GM12878 (cell line): ENCODE measurements at regions of chr21 and their contacts with region 1.

Region 1: DNA sequence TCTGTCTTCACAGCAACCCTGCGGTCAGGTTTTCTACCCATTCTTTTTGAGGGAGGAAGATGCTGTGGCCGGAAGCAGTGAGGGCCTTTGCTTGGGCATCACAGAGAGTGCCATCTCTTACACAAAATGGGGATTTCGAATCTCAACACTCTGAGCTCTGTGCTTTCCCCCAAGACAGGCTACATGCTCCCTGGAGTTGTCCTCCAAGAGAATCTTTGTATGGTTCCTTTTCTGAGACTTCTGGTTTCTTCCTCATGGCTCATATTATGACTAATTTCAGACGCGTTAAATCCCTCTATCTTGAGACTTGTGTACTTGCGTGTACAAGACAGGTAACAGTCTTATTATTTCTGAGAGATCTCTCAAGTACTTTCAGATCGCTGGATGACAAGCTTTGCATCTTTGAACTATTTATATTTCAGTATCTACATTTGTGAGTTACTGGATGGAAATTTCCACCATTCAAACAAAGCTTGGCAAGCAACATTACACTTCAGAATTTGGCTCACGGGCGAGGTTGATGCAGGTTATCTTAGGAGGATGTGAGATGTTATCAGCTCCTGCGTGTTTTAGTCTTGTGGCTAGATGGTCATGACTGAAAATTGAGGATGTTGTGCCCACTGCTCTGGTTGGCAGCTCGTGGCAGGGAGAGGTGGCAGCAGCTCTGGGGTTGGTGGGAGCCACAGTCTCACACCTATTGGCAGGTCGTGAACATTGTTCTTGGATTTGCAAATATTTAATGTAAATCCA is 19.4 kb downstream of the ABCG1 start:
- DNase-seq: peak; percentile 57
- ATAC-seq: peak; percentile 39
- H3K4me3 ChIP-seq: no peak overlapping the region
- H3K27ac ChIP-seq: peak overlapping the region; percentile 22
- H3K4me1 ChIP-seq: peaks cover 65% of the 10 kb centered on the region
- H3K27me3 ChIP-seq: no peaks in the 10 kb centered on the region
- CTCF ChIP-seq: no peak
- EP300 ChIP-seq: peak; percentile 25 to 39; a peak in 1 of 4 replicates
- POLR2A ChIP-seq: no peak
- RAD21 ChIP-seq: no peak

Region 2: DNA sequence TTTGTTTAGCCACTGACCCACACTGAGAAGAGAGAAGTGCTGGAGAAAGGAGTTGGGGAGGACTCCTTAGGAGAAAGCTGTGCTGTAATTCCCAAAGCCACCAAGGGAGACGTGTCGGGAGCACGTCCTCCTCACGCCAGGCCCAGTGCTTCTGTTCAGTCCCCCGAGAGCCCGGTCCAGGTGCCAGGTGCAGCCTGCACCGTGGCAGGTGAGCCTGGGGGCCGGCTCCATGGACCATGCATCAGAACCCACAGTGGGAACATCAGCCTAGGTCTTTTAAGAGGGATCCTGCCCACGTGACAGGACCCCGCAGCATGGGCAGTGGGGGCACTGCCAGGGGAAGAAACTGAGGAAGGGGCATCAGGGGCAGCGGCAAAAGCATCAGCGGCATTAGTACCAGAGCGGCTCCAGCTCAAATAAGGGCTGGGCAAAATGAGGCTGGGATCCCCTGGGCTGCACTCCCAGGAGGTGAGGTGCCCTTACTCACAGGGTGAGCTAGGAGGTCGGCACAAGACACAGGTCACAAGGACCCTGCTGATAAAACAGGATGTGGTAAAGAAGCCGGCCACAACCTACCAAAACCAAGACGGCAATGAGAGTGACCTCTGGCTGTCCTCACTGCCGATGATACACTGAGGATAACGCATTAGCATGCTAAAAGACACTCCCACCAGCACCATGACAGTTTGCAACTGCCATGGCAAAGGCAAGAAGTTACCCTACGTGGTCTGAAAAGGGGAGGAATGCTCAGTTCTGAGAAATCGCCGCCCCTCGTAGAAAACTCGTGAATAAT is 334.6 kb before region 1 on chr21:
- CTCF ChIA-PET with region 1: no interaction called
- POLR2A ChIA-PET with region 1: no interaction called
- RAD21 ChIA-PET with region 1: no interaction called
- SMC1A ChIA-PET with region 1: no interaction called
- in situ Hi-C with region 1: no loop called
- intact Hi-C with region 1: no loop called
- DNase-seq: no peak
- ATAC-seq: no peak
- H3K4me3 ChIP-seq: no peak overlapping the region
- H3K27ac ChIP-seq: no peak overlapping the region
- H3K4me1 ChIP-seq: peaks cover 7% of the 10 kb centered on the region
- H3K27me3 ChIP-seq: no peaks in the 10 kb centered on the region
- CTCF ChIP-seq: no peak
- EP300 ChIP-seq: no peak
- POLR2A ChIP-seq: no peak
- RAD21 ChIP-seq: no peak

Region 3: GRCh38 chr21:42164064-42164789 is 74.1 kb before region 1 on chr21:
- CTCF ChIA-PET with region 1: interaction called, 16 read pairs
- POLR2A ChIA-PET with region 1: interaction called, 4 read pairs
- RAD21 ChIA-PET with region 1: interaction called, 6 read pairs
- SMC1A ChIA-PET with region 1: interaction called, 21 read pairs
- in situ Hi-C with region 1: no loop called
- intact Hi-C with region 1: no loop called
- DNase-seq: no peak
- ATAC-seq: peak; percentile 99
- H3K4me3 ChIP-seq: no peak overlapping the region
- H3K27ac ChIP-seq: no peak overlapping the region
- H3K4me1 ChIP-seq: no peaks in the 10 kb centered on the region
- H3K27me3 ChIP-seq: peaks cover 2 to 3% of the 10 kb centered on the region in 2 experiments; a peak in 3 of 4 replicates
- CTCF ChIP-seq: peak; percentile 73 to 90 (median 78)
- EP300 ChIP-seq: no peak
- POLR2A ChIP-seq: no peak
- RAD21 ChIP-seq: peak; percentile 99

Region 4: DNA sequence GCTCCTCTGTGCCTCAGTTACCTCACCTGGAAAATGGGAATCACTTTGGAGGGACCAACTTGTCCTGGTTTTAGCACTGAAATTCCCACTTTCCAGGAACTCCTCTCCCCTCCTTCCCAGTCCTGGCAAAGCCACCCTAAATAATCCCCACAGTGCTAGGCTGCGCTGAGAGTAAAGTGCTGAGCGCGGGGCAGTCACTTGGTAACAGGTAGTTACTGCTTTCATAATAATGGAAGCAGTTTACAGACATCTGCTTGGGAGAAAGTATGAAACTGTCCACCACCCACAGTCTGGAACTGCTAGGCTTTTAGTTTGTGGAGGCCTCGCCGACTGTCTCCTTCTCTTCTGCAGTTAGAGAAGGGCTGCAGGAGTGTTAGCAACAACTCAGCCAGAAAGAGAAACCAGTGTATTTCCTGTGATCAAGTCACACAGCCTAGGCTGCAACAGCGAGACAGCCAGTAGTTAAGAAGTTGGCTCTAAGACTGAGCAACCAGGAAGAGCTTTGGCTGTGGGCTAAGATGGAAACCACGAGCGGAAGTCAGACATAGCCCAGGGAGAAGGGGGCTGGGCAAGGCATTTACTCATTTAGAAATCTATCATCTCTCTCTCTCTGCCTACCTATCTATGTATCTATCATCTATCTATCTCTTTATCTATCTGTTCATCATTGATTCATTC is 50.2 kb before region 1 on chr21:
- CTCF ChIA-PET with region 1: interaction called, 5 read pairs
- POLR2A ChIA-PET with region 1: interaction called, 5 read pairs
- RAD21 ChIA-PET with region 1: interaction called, 8 read pairs
- SMC1A ChIA-PET with region 1: interaction called, 23 read pairs
- in situ Hi-C with region 1: no loop called
- intact Hi-C with region 1: loop called (anchors 5 kb)
- DNase-seq: peak; percentile 92
- ATAC-seq: peak; percentile 99
- H3K4me3 ChIP-seq: peak overlapping the region; percentile 29; the same call in 1 of the 2 replicates
- H3K27ac ChIP-seq: peak overlapping the region; percentile 92
- H3K4me1 ChIP-seq: peaks cover 19% of the 10 kb centered on the region
- H3K27me3 ChIP-seq: no peaks in the 10 kb centered on the region
- CTCF ChIP-seq: no peak
- EP300 ChIP-seq: no peak; a peak in 1 of 4 replicates
- POLR2A ChIP-seq: peak; percentile 72
- RAD21 ChIP-seq: no peak

Region 5: DNA sequence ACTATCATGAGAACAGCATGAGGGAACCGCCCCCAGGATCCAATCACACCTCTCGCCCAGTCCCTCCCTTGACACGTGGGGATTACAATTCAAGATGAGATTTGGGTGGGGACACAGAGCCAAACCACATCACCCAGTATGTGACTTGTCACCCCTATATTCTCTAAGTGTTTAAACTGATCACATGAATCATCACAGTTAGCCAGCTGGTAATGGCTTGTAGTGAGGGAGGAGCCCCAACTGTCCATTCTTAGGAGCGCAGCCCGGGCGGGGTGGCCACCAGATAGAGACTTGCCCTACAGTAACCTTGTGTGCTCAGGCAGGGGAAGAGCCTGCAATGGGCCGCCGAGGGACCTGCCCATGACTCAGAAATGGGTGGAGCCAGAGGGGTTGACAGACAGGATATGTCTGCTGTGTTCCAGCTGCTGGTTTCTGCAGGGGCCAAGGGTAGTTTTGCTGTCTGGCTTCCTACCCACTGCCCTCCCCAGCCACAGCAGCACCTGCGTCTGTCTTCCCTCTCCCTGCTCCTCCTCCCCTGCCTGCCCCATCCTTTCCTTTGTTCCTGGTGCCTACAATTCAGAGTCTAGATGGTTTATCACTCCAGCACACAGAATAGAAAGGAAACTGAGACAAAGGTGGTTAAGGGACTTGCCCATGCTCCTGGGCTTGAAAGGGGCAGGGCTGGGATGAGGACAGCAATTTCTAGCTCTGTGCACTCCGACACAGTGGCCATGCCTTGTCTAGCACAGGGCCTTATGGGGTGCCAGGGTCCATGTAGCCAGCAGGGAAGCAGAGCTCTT is 10.3 kb before region 1 on chr21:
- CTCF ChIA-PET with region 1: interaction called, 24 read pairs
- POLR2A ChIA-PET with region 1: interaction called, 28 read pairs
- RAD21 ChIA-PET with region 1: interaction called, 48 read pairs
- SMC1A ChIA-PET with region 1: interaction called, 43 read pairs
- in situ Hi-C with region 1: no loop called
- intact Hi-C with region 1: no loop called
- DNase-seq: peak; percentile 85
- ATAC-seq: peak; percentile 92
- H3K4me3 ChIP-seq: no peak overlapping the region
- H3K27ac ChIP-seq: peak overlapping the region; percentile 22
- H3K4me1 ChIP-seq: peaks cover 31% of the 10 kb centered on the region
- H3K27me3 ChIP-seq: no peaks in the 10 kb centered on the region
- CTCF ChIP-seq: no peak
- EP300 ChIP-seq: peak in 1 of 2 experiments; percentile 55; a peak in 1 of 4 replicates
- POLR2A ChIP-seq: no peak
- RAD21 ChIP-seq: no peak